Right ventricle myocardium inferior (tissue), 1 donor: ENCODE measurements at regions of chr6 and their contacts with region 1.

Region 1: DNA sequence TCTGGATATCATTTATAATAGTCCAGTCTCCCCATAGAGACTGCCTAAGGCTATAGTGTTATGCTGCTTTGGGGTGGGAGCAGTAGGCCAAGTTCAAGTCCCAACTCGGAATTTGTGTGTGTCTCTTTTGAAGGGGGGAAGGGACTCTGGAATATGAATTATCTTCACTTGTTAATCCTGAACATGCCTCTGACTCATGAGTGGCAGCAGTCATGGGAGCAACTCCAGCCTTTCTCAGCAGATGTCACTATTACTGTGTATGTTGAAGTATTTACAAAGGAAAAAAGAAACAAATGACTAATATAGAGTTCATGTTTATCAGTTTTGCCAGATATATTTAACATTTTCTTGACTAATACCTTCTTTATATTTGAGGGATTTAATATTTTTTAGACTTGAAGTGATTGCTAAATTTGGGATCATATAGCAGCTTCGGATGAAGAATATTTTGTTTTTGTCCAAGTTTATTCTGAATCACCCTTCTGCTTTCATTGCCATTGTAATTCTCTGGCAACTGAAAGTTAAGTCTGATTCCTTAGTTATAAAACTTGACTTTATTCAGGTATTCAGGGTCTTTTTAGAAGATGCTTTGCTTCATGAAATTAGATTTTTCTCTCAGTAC is 23.4 kb downstream of the FAM217A start:
- DNase-seq: no peak
- ATAC-seq: peak; percentile 74

Region 2: DNA sequence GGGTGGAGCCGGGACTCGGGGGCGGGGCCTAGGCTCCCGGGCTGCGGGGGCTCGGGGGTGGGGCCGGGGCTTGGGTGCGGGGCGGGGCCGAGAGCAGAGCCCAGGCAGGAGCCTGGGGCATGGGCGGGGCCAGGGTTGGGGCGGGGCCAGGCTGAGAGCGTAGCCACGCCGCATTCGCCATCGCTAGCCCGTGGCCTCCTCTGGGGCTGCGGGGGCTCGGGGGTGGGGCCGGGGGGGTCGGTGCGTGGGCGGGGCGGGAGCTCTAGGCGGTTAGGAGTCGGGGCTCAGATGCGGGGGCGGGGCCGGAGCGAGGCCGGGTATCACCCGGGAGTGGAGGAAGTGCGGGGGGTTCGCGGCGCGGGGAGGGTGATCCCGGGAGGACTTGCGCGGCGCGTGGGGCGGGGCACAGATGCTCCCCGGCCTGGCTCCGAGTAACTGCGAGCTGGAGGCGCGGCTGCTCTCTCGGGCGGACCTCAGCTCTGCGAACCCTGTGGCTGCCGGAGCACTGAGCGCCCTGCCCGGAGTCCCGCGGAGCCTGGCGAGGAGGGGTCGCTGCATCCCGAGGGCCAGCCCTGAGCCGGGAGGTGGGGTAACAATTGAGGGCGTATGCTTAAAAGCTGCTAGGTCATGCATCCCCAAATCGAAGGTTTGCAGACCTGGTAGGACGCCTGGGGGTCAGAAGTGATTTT is 80.3 kb after region 1 on chr6:
- intact Hi-C with region 1: loop called (anchors 5 kb)
- DNase-seq: peak; percentile 98
- ATAC-seq: peak; percentile 97

Region 3: GRCh38 chr6:4155848-4156466 is 100.4 kb after region 1 on chr6:
- intact Hi-C with region 1: loop called (anchors 2 kb)
- DNase-seq: no peak
- ATAC-seq: peak; percentile 74

Region 4: DNA sequence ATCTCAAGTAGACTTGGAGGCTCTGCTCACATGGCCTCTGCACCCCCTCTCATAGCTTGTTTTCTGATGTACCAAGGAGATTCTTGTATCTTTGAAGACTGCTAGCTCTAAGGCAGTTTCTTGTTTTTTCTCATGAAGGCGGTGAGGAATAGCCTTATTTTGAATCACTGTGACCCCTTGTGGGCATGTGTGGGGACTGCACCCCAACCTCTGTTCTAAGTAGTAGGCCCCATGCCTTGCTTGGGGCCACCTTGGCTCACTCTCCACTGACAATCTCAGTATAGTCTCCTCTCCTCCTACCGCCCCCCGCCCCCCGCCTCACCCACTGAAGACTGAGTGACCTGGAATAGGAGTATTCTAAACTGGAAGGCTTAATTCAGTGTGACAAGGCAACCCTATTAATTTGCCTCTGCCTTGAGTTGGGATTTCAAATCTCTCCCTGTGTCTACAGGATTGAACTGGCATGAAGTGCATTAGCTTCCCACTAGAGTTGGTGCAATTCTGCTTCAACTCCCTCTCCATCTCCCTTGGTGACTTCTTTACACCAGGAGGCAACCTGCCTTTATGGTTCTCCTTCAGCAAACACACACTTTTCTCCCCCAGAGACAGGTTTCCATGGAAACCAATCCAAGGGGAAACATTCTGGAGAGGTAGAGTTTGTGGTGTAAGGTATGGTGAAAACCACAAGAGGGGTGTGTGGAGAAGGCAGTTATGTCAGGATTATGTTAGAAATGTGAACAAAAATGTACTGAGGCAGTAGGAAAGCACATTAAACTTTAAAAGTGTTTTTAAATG is 155.3 kb after region 1 on chr6:
- intact Hi-C with region 1: loop called (anchors 5 kb)
- DNase-seq: no peak
- ATAC-seq: peak; percentile 51